Left colon (tissue), 2 donors: ENCODE measurements at regions of chr17 and their contacts with region 1.

Region 1: DNA sequence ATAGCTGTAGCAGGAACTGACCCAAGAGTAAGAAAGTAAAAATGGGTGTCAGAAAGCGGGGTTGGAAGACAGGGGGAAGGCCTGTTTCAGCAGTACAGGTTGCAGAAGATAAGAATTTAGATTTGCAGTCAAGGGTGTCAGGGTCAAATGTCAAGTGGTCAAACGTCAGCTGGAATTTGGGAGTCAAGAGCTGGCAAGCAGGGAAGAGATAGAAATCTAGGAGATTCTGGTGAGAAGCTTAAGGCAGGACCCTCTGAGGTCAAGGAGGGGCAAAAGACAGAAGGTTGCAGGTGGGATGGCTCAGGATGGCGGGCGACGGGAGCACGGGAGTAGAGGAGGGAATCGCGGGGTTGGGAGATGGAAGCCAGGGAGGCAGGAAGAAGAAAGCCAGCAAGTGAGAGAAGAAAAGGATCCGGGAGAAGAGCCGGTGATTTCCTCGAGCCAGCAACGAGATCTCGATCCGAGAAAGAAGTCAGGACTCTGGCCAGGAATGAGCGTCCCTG is 335 bp downstream of the SLC25A35 start:
- DNase-seq: no peak
- ATAC-seq: peak; percentile 16

Region 2: GRCh38 chr17:8234361-8235270 is 60.2 kb before region 1 on chr17:
- intact Hi-C with region 1: no loop called
- DNase-seq: no peak
- ATAC-seq: no peak

Region 3: DNA sequence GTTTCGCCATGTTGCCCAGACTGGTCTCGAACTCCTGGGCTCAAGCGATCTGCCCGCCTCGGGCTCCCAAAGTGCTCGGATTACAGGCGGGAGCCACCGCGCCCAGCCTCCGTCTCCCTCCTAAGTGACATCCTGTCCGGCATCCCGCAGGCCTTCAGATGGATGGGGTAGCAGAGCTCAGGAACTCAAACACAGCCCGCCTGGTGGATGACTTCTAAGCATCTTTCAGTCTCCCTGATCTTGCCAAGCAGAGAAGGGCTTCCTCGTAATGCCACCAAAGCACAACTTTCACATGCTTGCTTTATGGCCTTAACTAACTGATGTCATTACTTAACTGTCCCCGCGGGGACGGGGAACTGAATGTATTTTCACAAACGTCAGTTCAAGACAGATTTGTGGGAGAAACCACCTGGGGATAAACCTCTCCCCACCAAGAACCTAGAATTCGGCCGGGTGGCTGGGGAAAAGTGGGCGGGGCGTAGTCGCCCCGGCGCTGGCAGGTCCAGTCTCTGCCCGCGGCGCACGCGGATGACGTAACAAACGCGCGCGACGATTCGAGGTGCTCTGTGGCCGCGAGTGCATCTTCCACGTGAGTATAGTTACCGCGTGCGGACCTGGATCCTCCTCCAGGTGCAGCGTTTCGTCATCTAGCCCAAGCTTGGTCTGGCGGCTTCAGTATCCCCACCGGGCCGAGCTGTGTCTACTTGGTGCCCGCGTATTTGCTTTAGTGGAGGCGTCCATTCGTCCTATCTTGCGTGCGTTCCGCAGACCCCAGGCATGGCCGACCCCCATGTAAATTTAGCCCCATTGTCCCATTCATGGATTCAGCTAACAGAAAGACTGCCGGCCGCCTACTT is 45.9 kb before region 1 on chr17 and contains the start of gene PFAS:
- intact Hi-C with region 1: loop called in 1 of 2 experiments (anchors 10 kb)
- DNase-seq: peak; percentile 96 to 98
- ATAC-seq: peak; percentile 70
- total RNA-seq, gene PFAS: 17.0 to 23.9 TPM